ENCODE measurements at regions of chr12 and their contacts with region 1.

Region 1: DNA sequence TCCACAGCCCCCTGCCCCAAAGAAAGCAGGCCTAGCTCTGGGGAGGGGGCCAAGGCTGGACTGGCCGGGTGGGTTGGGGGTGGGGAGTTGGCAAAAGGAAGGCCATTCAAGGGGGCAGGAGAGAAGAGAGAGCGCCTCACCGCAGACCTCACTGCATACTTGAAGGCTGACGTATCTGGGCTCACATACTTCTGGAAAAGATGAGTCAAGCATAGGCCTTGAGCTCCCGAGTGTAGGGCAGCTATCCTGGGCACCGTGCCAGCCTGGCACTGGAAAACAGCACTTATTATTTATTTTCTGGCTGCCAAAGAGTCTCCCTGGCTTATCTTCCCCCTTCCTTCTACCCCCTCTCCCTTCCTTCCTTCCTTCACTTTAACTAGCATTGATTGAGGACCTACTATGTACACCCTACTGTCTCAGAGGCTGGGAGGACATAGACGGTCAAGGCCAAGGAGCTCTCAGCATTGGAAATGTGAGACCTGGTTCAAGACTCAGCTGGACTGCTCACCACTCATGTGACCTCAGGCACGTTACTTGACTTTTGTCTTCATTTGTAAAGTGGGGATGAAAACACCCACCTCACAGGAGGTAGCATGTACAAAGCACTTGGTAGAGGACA is 468 bp upstream of the KRT80 start:
- DNase-seq: peak; percentile 85
- H3K4me3 ChIP-seq: no peak overlapping the region
- H3K27ac ChIP-seq: peak overlapping the region; percentile 87 to 88
- H3K4me1 ChIP-seq: peaks cover 53 to 66% of the 10 kb centered on the region in 2 experiments
- H3K27me3 ChIP-seq: no peaks in the 10 kb centered on the region
- CTCF ChIP-seq: no peak
- EP300 ChIP-seq: peak in 1 of 2 experiments; percentile 96; a peak in 1 of 4 replicates
- RAD21 ChIP-seq: no peak

Region 2: GRCh38 chr12:52171950-52172512 is 20.3 kb before region 1 on chr12:
- CTCF ChIA-PET with region 1: interaction called, 13 read pairs
- POLR2A ChIA-PET with region 1: interaction called, 3 read pairs
- DNase-seq: no peak
- H3K4me3 ChIP-seq: no peak overlapping the region
- H3K27ac ChIP-seq: no peak overlapping the region; a peak in 1 of 4 replicates
- H3K4me1 ChIP-seq: peaks cover 12 to 52% of the 10 kb centered on the region in 2 experiments; a peak in 2 of 4 replicates
- H3K27me3 ChIP-seq: no peaks in the 10 kb centered on the region
- CTCF ChIP-seq: peak; percentile 56
- EP300 ChIP-seq: no peak
- RAD21 ChIP-seq: peak; percentile 57

Region 3: DNA sequence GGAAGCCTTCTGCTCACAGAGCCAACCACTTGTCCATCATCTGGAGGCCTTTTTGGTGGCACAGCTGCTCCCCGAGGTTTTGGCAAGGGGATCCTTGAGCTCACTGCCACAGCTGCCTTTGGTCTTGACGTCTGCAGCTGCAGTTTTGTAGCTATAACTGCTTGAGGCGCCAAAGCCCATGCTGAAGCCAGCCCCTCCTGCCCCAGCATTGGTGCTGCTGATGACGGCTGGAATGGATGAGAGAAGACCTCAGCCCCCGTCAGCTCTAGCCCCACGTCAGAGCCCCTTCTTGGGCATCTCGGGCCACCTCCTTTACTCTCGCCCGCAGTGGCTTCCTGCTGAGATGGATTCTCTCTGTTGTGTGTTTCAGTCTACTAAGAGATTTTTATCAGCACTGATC is 393.7 kb after region 1 on chr12:
- CTCF ChIA-PET with region 1: no interaction called
- POLR2A ChIA-PET with region 1: no interaction called
- DNase-seq: no peak
- H3K4me3 ChIP-seq: no peak overlapping the region
- H3K27ac ChIP-seq: no peak overlapping the region
- H3K4me1 ChIP-seq: no peaks in the 10 kb centered on the region
- H3K27me3 ChIP-seq: peaks cover 46% of the 10 kb centered on the region
- CTCF ChIP-seq: no peak
- EP300 ChIP-seq: no peak
- RAD21 ChIP-seq: no peak